WTC11 (cell line): ENCODE measurements at regions of chr11 and their contacts with region 1.

Region 1: DNA sequence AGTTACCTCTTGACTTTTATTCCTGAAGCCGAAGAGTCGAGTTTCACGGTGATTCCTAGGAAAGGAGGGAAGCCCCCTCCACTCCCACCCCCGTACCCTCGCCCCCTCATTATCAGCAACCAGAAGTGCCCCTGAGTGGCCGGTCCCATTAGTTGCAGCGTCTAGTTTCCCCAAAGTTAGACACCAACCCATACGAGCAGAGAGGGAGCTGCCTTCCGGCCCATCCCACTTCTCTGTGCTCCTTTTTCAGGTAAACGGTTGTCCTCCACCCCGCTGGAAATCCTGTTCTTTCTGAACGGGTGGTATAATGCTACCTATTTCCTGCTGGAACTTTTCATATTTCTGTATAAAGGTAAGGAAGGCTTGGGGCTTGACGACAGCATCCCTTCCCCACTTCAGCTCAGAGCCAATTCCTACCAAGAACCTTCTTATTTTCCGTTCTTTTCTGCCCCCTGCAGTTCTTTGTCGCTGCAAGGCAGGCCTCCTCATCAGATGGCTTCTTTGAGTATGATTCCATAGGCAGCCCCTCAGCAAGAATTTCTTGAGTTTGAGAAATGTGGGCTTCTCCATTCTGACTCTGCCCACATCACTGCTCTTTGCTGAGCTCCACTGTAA is 701 bp downstream of the TMEM216 start:
- DNase-seq: no peak
- ATAC-seq: peak; percentile 14
- H3K4me3 Mint-ChIP-seq: peak overlapping the region; percentile 96
- H3K27ac Mint-ChIP-seq: peak overlapping the region; percentile 80
- H3K4me1 Mint-ChIP-seq: peaks cover 22% of the 10 kb centered on the region
- H3K27me3 Mint-ChIP-seq: no peaks in the 10 kb centered on the region
- CTCF ChIP-seq: no peak

Region 2: DNA sequence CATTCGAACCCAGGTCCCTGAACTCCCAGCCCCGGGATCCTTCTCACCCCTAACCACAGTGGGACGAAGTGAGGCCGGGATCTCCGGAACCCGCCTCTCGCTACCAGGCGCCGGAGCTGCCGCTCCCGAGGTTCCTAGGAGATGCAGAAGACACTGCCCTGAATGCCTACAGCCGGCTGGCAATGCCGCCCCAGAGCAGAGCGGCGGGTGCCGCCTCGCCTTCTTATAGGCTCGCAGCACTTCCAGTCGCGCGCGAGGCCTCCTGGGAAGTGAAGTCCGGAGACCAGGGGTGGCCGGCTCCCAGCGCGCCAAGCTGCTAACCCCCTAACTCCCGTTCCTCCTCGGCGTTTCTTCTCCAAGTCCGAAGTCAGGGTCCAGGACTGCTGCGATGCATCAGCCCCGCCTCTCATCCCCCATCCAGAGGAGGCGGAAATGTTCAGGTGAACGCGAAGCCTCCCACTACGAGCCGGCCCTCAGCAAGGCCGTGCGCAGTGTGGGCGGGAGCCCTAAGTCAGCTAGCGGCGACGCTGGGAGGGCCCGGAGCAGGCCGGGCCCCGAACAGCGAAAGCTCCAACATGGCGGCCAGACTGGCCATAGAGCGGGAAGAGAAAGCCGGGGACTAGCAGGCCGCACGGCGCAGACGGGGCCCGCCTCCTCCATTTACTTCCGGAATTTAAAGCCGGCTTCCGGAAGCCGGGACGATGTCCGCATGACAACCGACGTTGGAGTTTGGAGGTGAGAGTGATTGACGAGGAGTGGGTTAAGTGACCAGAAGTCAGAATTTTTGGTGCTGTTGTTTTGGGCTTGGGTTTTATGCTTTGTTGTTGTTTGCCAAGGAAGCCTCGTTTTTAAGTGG is 31.2 kb before region 1 on chr11 and contains the starts of genes CYB561A3 and TMEM138:
- CTCF ChIA-PET with region 1: interaction called, 11 read pairs
- POLR2A ChIA-PET with region 1: interaction called, 17 read pairs
- DNase-seq: peak; percentile 92
- ATAC-seq: peak; percentile 93
- H3K4me3 Mint-ChIP-seq: peak within 1 kb of the TSS; percentile 96
- H3K27ac Mint-ChIP-seq: peak within 1 kb of the TSS; percentile 98
- H3K4me1 Mint-ChIP-seq: peaks cover 22% of the 10 kb centered on the region
- H3K27me3 Mint-ChIP-seq: no peaks in the 10 kb centered on the region
- CTCF ChIP-seq: no peak
- total RNA-seq, gene CYB561A3: 34.3 to 38.8 TPM (median 35.0 TPM) in 3 replicates
- total RNA-seq, gene TMEM138: 34.0 to 39.0 TPM (median 38.8 TPM) in 3 replicates

Region 3: GRCh38 chr11:61403658-61404057 is 10.6 kb after region 1 on chr11:
- CTCF ChIA-PET with region 1: interaction called, 14 read pairs
- POLR2A ChIA-PET with region 1: interaction called, 3 read pairs
- DNase-seq: no peak
- ATAC-seq: no peak
- H3K4me3 Mint-ChIP-seq: no peak overlapping the region
- H3K27ac Mint-ChIP-seq: no peak overlapping the region
- H3K4me1 Mint-ChIP-seq: no peaks in the 10 kb centered on the region
- H3K27me3 Mint-ChIP-seq: no peaks in the 10 kb centered on the region
- CTCF ChIP-seq: no peak